KBM-7 (cell line): ENCODE measurements at regions of chr10 and their contacts with region 1.

Region 1: GRCh38 chr10:68156373-68157185 is 47.3 kb downstream of the MYPN start:
- DNase-seq: peak; percentile 70

Region 2: GRCh38 chr10:67849331-67850011 is 307.1 kb before region 1 on chr10:
- in situ Hi-C with region 1: loop called (anchors 25 kb)
- DNase-seq: peak; percentile 94

Region 3: DNA sequence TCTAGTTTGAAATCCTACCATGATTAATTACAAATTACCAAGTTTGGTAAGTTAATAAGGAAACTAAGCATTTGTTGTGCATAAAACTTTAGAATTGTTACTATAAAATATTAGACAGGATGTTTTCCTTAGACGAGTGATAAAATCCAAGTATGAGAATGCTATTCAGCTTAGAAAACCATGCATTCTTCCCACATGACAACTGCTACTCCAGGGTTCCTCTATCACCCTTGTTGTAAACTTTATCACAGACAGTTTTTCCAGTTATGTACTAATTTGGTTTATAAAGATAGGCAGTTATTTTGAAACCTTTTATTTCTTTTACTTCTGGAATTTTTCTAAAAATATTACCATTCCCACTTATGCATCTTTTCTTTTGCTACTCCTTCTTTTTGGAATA is 220.2 kb before region 1 on chr10:
- in situ Hi-C with region 1: no loop called
- DNase-seq: no peak

Region 4: DNA sequence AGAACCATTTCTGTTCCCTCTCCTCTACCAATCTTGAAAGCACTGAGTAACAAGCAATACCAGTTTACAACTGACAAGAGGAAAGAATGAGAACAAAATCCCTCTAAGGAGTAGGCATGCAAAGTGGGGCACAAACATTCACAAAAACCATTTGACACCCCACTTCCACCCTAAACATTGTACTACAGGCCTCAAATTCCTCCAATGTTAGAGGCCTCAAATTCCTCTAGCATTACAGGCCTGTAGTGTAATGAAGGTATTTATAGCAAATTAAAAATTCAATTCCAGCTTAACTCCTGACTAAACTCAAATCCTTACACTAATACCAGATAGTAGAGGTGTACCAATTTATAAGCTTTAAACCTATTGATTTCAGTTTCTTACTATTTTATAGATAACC is 186.7 kb before region 1 on chr10:
- in situ Hi-C with region 1: no loop called
- DNase-seq: no peak